GM10248 (cell line): ENCODE measurements at regions of chr1 and their contacts with region 1.

Region 1: GRCh38 chr1:244414543-244414942 is 37.2 kb downstream of the ADSS2 start:
- DNase-seq: no peak
- CTCF ChIP-seq: no peak

Region 2: DNA sequence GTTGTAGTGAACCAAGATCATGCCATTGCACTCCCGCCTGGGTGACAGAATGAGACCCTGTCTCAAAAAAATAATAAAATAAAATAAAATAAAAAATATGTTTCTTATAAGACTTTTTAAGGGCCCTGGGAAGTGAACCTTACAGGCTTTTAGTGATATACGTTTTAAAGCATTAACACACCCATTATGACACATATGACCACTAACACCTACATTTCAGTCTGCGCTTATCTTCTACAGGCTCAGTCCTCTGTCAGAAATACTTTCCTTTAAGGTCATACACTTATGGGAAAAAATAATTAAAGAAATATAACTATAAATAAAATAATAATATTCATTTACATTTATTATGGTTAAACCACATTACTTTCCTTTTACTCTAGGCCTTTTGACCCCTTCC is 15.3 kb after region 1 on chr1:
- CTCF ChIA-PET with region 1: interaction called, 18 read pairs
- POLR2A ChIA-PET with region 1: no interaction called
- DNase-seq: no peak
- CTCF ChIP-seq: no peak